K562 (cell line): ENCODE measurements at regions of chr11 and their contacts with region 1.

Region 1: DNA sequence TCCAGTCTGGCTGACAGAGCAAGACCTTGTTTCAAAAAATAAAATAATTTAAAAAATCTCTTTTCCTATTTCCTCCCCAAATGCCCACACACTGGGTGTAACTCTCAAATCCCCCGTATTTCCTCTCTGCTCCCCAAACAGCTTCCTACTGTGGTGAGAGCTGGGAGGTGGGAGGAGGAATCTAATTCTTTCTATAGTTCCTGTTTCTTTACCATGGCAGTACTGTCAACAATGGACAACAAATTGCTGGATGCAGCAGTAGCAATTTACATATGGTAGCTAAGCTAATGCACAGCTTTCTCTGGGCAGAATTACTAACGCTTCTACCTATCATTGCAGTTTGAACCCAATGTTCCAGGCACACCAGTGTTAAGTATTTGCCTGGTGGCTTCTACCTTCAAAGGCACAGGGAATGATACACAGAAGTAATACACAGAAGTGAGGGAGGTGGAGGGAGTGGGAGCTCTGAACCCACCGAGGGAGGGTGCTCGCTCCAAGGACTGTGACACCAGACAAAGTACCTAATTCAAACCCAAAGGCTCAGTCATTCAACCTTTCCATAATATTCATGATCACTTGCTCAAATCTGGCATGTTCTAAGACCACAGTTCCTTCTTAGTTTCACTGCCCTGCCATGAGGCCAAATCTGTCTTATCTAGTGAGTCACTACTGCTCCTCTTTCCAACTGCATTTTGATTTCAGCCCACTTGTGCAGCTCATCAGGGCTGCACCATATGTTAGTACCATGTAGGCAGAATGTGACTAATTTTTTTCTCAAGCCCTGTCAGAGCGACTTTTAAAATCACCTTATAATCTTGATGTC is 37.9 kb downstream of the CELF1 start:
- DNase-seq: peak; percentile 33 to 70 (median 38)
- ATAC-seq: peak; percentile 63
- H3K4me3 ChIP-seq: no peak overlapping the region
- H3K27ac ChIP-seq: peak overlapping the region; percentile 48; the same call in 1 of the 3 replicates
- H3K4me1 ChIP-seq: peaks cover 37 to 59% of the 10 kb centered on the region in 2 experiments
- H3K27me3 ChIP-seq: no peaks in the 10 kb centered on the region
- CTCF ChIP-seq: no peak
- EP300 ChIP-seq: peak; percentile 33; the same call in 1 of the 2 replicates
- POLR2A ChIP-seq: no peak
- RAD21 ChIP-seq: no peak

Region 2: DNA sequence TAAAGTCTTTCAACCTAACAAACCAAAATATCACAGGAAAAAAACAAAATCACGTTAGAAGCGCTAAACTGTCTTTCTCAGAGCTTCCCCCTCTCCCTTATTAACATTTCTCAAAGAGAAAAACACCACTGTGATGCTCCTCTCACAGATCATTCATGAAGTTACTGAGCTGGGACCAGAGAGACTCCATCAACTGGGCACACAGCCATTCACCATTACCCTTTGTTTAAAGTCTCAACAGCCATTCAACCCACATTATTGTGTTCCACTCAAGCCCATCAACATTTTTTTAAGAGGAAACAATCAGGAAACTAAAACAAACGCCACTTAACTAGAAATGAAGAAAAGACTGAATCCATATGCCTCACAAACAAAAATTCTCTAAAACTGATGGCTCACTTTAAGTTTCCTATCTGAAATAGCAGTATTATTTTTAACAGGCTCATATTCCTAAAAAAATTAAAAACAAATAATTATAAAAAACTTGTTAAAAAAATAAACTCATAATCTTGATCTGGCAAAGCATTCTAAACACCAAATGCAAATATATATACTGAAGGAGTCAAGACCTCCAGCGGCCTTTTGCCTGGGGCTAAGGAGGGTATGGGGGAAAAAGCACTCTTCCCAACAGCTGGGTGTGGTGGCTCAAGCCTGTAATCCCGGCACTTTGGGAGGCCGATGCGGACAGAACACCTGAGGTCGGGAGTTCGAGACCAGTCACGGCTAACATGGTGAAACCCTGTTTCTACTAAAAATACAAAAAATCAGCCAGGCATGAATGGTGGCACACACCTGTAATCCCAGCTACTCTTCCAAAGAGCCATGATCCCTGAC is 23.9 kb after region 1 on chr11:
- CTCF ChIA-PET with region 1: no interaction called
- POLR2A ChIA-PET with region 1: interaction called, 10 read pairs
- in situ Hi-C with region 1: no loop called
- intact Hi-C with region 1: no loop called
- DNase-seq: no peak
- ATAC-seq: no peak
- H3K4me3 ChIP-seq: no peak overlapping the region
- H3K27ac ChIP-seq: no peak overlapping the region
- H3K4me1 ChIP-seq: peaks cover 4 to 5% of the 10 kb centered on the region in 2 experiments; a peak in 3 of 5 replicates
- H3K27me3 ChIP-seq: no peaks in the 10 kb centered on the region
- CTCF ChIP-seq: no peak
- EP300 ChIP-seq: no peak
- POLR2A ChIP-seq: no peak
- RAD21 ChIP-seq: no peak

Region 3: GRCh38 chr11:47917643-47918369 is 402.8 kb after region 1 on chr11:
- CTCF ChIA-PET with region 1: no interaction called
- POLR2A ChIA-PET with region 1: no interaction called
- in situ Hi-C with region 1: no loop called
- intact Hi-C with region 1: no loop called
- DNase-seq: peak; percentile 78 to 89 (median 84)
- ATAC-seq: peak; percentile 92
- H3K4me3 ChIP-seq: no peak overlapping the region
- H3K27ac ChIP-seq: peak overlapping the region; percentile 68
- H3K4me1 ChIP-seq: peaks cover 28 to 51% of the 10 kb centered on the region in 2 experiments
- H3K27me3 ChIP-seq: no peaks in the 10 kb centered on the region
- CTCF ChIP-seq: no peak
- EP300 ChIP-seq: no peak
- POLR2A ChIP-seq: peak; percentile 47; the same call in 1 of the 2 replicates
- RAD21 ChIP-seq: no peak